Posterior vena cava (tissue), 2 donors: ENCODE measurements at regions of chr22 and their contacts with region 1.

Region 1: GRCh38 chr22:38927033-38927781 is 30.2 kb upstream of the APOBEC3A start:
- DNase-seq: peak; percentile 90

Region 2: DNA sequence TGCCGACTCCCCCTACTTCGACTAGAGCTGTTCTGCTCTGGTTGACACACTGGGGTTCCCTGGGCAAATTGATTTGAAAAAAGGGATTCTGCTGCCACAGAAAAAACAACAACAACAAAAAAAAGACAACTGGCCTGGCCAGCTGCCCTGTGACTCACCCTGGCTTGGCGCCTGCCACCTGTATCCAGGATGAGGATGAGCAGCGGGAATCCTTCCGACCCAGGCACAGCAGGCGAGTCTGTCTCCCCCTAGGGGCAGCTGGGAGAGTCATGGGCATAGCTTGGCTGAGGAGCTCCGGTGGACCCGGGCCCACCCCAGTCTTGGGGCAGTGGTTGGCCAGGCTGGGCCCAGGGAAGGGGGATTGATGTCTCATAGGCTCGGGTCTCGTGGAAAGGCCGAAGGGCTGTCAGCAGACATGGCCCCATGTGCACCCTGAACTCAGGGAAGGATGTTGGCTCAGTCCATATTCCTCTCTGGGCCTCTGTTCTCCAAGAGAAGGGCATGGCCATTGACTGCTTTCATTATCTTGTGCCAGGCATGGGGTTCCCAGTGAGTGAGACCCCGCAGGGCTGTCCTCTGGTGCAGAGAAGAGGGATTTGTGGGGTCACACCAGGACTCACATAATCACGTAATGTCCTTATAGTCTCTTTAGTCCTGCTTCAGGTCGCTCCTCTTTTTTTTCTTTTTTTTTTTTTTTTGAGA is 161.0 kb before region 1 on chr22:
- intact Hi-C with region 1: loop called in 1 of 2 experiments (anchors 5 kb)
- DNase-seq: no peak

Region 3: DNA sequence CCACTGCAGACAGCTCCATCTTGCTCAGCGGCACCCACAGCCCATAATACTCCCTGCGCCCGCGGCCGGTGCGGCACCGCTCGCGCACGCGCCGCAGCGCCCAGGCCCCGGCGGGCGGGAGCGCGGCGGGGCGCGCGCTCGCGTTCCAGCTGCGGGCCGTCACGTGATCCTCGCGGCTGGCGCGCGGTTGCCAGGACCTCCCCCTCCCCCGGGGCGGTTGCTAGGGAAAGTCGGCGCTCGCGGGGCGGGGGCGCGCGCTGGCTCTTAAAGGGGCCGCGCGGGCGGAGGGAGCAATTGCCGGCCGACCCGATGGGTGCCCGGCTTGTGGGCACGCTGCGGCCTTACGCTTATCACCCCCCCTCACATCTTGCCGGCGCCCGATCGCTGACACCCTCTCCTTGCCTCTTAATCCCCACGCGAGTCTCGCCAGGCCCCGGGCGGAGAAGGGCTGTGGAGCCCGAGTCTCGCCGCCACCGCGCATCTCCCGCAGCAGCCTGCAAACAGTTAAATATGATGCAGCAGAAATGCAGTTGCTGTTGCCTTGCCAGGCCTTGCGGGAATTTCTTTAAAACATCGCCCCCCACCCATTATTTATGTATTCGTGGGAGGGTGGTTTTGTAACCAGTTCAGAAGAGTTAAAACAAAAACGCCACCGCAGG is 54.9 kb before region 1 on chr22 and contains the start of gene CBX6:
- intact Hi-C with region 1: loop called in 1 of 2 experiments (anchors 5 kb)
- DNase-seq: peak; percentile 98
- total RNA-seq, gene CBX6: 98.0 to 105 TPM

Region 4: GRCh38 chr22:38886333-38886732 is 40.9 kb before region 1 on chr22:
- intact Hi-C with region 1: loop called in 1 of 2 experiments (anchors 5 kb)
- DNase-seq: no peak